ENCODE measurements at regions of chr6 and their contacts with region 1.

Region 1: GRCh38 chr6:132300323-132300949 is 100.8 kb downstream of the MOXD1 start:
- DNase-seq: peak in 1 of 2 experiments; percentile 49
- H3K4me3 ChIP-seq: no peak overlapping the region
- H3K4me3 Mint-ChIP-seq: no peak overlapping the region
- H3K27ac Mint-ChIP-seq: no peak overlapping the region
- H3K4me1 ChIP-seq: no peaks in the 10 kb centered on the region
- H3K4me1 Mint-ChIP-seq: no peaks in the 10 kb centered on the region
- H3K27me3 ChIP-seq: no peaks in the 10 kb centered on the region
- H3K27me3 Mint-ChIP-seq: peaks cover 8% of the 10 kb centered on the region
- CTCF ChIP-seq: peak; percentile 42 to 59

Region 2: GRCh38 chr6:131744432-131745287 is 555.8 kb before region 1 on chr6:
- CTCF ChIA-PET with region 1: no interaction called
- POLR2A ChIA-PET with region 1: no interaction called
- intact Hi-C with region 1: no loop called
- DNase-seq: no peak
- H3K4me3 ChIP-seq: no peak overlapping the region
- H3K4me3 Mint-ChIP-seq: no peak overlapping the region
- H3K27ac Mint-ChIP-seq: no peak overlapping the region
- H3K4me1 ChIP-seq: no peaks in the 10 kb centered on the region
- H3K4me1 Mint-ChIP-seq: no peaks in the 10 kb centered on the region
- H3K27me3 ChIP-seq: no peaks in the 10 kb centered on the region
- H3K27me3 Mint-ChIP-seq: peaks cover 9% of the 10 kb centered on the region
- CTCF ChIP-seq: no peak

Region 3: DNA sequence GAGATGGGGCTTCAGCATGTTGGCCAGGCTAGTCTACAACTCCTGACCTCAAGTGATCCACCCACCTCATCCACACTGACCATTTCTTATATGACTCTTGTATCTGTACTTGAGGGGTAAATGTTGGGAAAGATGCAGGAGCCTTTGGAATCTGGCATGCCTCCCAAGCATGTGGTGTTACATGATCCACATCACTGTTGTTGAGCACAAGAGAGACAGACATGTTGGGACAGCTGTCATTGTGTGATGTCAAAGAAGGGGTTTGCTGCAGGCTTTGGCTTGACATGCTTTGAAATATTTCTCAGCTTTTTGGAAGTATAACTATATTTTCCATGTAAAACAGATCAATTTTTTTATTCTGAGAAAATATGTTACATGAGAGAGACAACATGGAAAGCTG is 39.1 kb before region 1 on chr6:
- CTCF ChIA-PET with region 1: no interaction called
- POLR2A ChIA-PET with region 1: no interaction called
- intact Hi-C with region 1: no loop called
- DNase-seq: no peak
- H3K4me3 ChIP-seq: no peak overlapping the region
- H3K4me3 Mint-ChIP-seq: no peak overlapping the region
- H3K27ac Mint-ChIP-seq: no peak overlapping the region
- H3K4me1 ChIP-seq: no peaks in the 10 kb centered on the region
- H3K4me1 Mint-ChIP-seq: no peaks in the 10 kb centered on the region
- H3K27me3 ChIP-seq: no peaks in the 10 kb centered on the region
- H3K27me3 Mint-ChIP-seq: peaks cover 10% of the 10 kb centered on the region
- CTCF ChIP-seq: no peak

Region 4: DNA sequence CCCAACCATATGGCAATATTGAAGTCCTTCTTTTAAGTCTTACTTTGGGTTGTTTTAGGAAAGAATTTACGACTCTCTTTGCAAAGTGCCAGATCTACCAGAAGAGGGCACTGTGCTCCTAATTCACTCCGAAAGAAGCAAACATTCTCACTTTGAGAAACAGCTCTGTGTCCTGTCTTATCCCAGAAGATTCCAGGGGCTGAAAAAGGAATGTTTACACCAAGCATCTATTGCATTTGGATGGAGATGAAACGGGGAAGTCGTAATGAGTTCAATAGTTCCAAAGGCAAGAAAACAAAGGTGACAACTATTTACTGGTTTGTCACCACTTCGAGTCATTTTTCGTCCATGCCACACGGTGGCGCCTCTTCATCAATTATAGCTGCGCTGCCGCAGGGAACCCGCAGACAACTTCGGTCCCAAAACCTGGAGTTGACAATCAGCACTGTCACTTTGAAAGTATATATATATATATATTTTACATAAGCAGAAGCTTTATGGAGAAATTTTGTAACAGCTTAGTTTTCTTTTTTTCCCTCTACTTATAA is 20.8 kb before region 1 on chr6:
- CTCF ChIA-PET with region 1: interaction called, 57 read pairs
- POLR2A ChIA-PET with region 1: no interaction called
- intact Hi-C with region 1: loop called (anchors 1 kb)
- DNase-seq: peak; percentile 57 to 75
- H3K4me3 ChIP-seq: peak overlapping the region; percentile 40
- H3K4me3 Mint-ChIP-seq: peak overlapping the region; percentile 70
- H3K27ac Mint-ChIP-seq: no peak overlapping the region
- H3K4me1 ChIP-seq: no peaks in the 10 kb centered on the region
- H3K4me1 Mint-ChIP-seq: no peaks in the 10 kb centered on the region
- H3K27me3 ChIP-seq: no peaks in the 10 kb centered on the region
- H3K27me3 Mint-ChIP-seq: peaks cover 10% of the 10 kb centered on the region
- CTCF ChIP-seq: peak; percentile 64 to 85

Region 5: GRCh38 chr6:132391391-132392271 is 91.2 kb after region 1 on chr6:
- CTCF ChIA-PET with region 1: interaction called, 5 read pairs
- POLR2A ChIA-PET with region 1: no interaction called
- intact Hi-C with region 1: loop called (anchors 1 kb)
- DNase-seq: no peak
- H3K4me3 ChIP-seq: no peak overlapping the region
- H3K4me3 Mint-ChIP-seq: no peak overlapping the region
- H3K27ac Mint-ChIP-seq: no peak overlapping the region
- H3K4me1 ChIP-seq: no peaks in the 10 kb centered on the region
- H3K4me1 Mint-ChIP-seq: no peaks in the 10 kb centered on the region
- H3K27me3 ChIP-seq: no peaks in the 10 kb centered on the region
- H3K27me3 Mint-ChIP-seq: peaks cover 21% of the 10 kb centered on the region
- CTCF ChIP-seq: no peak

Region 6: DNA sequence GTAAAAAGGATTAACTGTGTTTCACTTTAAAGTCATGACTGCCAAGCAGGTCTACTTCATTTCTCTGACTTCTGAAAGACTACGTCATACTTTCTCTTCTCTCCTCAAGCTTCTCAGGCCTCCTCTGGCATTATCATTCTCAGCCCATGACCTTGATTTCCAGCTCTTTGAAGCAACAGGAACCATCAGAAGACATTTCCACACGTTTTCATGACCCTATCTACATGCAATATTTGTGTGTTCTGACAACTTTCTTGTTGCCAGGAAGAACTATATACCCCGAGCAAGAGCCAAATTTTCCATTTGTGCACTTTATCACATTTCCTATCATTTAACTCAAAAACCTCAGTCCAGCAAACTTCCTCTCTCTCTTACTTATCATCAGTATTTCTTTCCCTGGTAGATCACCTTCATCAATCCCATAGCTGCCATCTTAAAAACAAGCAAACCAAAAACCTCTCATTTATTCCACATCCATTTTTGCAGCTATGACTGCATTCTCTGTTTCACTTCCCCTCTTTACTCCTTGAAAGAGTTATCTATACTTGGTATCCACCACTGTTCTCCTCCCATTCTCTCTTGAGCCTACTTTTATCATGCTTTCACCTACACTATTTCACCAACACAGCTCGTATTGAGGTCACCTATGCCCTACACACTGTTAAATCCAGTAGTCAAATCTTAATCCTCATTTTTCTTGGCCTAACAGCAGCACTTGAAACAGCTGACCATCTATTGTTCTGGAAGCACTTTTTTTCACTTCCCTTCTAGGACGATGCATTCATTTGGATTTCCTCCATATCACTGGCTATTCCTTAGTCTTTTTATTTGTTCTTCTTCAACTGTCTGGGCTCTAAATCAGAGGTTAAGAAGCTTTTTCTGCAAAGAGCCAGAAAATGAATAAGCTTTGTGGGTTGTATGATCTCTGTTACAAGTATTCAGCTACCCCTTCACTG is 165.4 kb after region 1 on chr6:
- CTCF ChIA-PET with region 1: no interaction called
- POLR2A ChIA-PET with region 1: no interaction called
- intact Hi-C with region 1: no loop called
- DNase-seq: no peak
- H3K4me3 ChIP-seq: no peak overlapping the region
- H3K4me3 Mint-ChIP-seq: no peak overlapping the region
- H3K27ac Mint-ChIP-seq: no peak overlapping the region
- H3K4me1 ChIP-seq: peaks cover 19% of the 10 kb centered on the region
- H3K4me1 Mint-ChIP-seq: no peaks in the 10 kb centered on the region
- H3K27me3 ChIP-seq: no peaks in the 10 kb centered on the region
- H3K27me3 Mint-ChIP-seq: no peaks in the 10 kb centered on the region
- CTCF ChIP-seq: no peak

Region 7: DNA sequence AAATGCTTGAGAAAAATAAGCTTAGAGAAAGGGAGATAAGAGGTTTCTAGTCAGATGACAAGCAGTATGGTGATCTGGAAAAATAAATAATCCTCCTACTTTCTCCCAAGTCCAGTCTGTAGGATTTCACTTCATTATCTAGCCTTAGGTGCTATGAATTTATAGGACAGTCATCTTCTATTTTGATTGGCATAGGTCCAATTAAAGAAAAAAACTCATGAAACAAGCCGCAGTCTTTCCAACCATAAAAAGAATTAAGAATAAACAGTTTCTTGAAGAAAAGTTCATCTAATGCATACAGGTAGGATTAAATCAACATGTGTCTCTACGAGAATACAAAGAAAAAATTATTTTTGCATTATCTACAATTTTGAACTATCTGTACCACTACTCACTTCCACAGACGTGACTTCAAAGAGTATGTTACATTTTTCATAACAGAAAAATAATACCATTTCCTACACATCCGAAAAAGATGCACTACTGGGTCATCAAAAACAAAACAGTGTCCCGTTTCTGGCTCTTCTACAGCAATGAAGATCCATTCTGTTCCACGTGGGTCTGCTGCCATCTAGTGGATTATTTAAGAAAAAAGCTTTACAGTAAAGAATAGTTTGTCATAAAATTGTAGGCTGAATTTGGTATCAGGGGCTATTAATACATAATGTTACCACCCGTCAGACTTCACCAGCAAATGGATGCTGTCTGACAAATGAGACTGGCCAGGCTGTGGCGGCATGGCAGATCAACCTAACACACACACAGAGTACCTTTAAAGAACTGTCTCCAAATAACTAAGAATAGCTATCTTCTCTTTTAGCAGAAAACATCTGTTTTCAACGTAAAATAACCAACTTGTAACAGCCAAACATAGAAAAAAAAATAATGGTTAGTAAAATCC is 183.6 kb after region 1 on chr6:
- CTCF ChIA-PET with region 1: interaction called, 6 read pairs
- POLR2A ChIA-PET with region 1: no interaction called
- intact Hi-C with region 1: loop called (anchors 1 kb)
- DNase-seq: peak in 1 of 2 experiments; percentile 59
- H3K4me3 ChIP-seq: no peak overlapping the region
- H3K4me3 Mint-ChIP-seq: no peak overlapping the region
- H3K27ac Mint-ChIP-seq: no peak overlapping the region
- H3K4me1 ChIP-seq: no peaks in the 10 kb centered on the region
- H3K4me1 Mint-ChIP-seq: no peaks in the 10 kb centered on the region
- H3K27me3 ChIP-seq: no peaks in the 10 kb centered on the region
- H3K27me3 Mint-ChIP-seq: no peaks in the 10 kb centered on the region
- CTCF ChIP-seq: peak; percentile 59 to 64